Activated T-helper 2 cell treated with anti-CD3 and anti-CD28 coated beads, Interferon-gamma antibody, Interleukin-2, Interleukin-4, amounts not matched to agents 10 μg/mL and 5 μg/mL and 100 μg/mL, durations not matched to agents 14 hours and 24 hours and 36 hours (primary cell): ENCODE measurements at regions of chr1 and their contacts with region 1.

Region 1: DNA sequence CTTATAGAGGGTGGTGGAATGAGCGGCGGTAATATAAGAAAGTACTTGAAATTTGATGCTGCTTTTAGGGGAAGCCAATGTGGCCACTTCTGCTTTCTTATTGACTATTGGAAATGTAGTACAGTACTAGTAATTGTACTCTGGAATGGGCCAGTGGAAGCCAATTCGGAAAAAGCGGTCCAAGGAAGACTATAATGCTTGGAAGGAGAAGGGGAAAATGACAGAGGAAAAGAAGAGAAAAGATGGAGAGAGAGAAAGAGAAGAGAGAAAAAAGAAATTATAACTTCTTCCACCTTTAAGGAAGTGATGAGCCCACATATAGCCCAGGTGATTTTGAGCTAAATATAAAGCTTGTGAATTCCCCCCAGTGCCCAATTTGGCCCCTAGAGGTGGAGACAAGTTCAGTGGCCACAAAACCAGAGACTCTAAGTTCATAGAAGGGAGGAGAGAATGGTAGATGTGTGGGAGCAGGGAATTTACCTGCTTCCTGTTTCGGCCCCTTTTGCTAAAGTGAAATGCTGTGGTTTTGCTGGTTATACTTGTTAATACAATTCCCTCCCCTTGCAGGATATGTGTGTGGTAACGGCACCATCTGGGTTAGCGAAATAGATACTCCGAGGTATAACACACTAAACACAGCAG is 35.7 kb upstream of the DUSP10 start:
- DNase-seq: peak; percentile 37
- H3K4me3 Mint-ChIP-seq: peak overlapping the region; percentile 48
- H3K27ac Mint-ChIP-seq: peak overlapping the region; percentile 92
- H3K4me1 Mint-ChIP-seq: peaks cover 78% of the 10 kb centered on the region
- H3K27me3 Mint-ChIP-seq: no peaks in the 10 kb centered on the region

Region 2: DNA sequence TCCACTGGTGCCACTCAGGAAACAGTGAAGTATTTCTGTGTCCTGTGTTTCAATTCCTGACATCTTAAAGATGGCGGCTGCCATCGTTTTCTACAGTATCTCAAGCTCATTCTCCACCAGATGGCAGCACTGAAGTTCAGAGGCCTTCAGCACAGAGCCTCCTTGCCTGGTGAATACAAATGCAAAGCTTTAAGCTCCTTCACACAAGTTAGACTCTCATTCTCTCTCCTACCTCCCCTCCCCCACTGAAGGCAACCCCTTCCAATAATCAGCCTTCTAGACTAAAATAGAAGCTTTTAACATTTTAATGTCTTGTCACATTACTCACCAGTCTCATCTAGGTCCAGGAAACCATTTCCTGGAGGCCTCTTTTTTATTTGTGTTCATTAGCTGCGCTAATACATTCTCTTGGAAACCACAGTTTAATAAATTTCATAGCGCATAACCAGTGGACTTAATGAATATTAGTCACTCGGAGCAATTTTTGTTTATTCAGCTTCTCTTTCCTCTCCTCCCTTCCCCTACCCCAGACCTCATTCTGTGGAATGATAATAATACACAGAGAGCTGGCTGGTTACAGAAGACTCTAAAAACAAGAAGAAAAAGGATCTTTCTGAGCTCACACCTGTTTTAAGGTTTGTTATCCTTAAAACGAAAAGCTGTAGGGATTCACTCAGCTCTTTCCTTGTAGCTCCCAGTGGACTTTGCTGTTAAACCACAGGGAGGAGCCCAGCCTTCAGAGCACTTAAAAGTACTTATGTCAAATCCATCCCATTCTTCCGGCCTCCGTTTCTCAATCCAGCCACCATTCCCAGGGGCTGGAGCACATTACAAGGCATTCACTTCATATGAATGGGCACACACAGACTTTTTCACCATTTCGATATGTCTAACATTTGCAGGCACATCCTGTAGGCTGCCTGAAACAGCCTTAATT is 513.5 kb before region 1 on chr1:
- intact Hi-C with region 1: no loop called
- DNase-seq: peak; percentile 13
- H3K4me3 Mint-ChIP-seq: no peak overlapping the region
- H3K27ac Mint-ChIP-seq: no peak overlapping the region
- H3K4me1 Mint-ChIP-seq: no peaks in the 10 kb centered on the region
- H3K27me3 Mint-ChIP-seq: no peaks in the 10 kb centered on the region

Region 3: DNA sequence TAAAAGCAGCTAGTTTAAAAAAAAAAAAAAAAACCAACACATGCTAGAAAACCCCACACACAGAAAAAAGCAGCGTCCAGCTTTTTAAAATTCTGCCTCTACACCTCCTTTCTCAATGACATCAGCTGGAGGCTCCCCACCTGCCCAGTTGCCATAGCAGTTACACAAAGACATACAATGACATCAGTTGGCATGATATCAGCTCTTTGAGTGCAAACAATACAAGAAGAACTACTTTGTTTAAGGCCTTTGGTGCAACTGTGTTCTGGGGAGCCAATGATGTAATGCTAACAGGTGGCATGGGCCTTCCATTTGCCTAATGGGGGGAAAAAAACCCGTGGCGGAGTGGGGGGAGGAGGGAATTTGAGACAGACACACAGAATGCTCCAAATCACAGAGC is 68.6 kb before region 1 on chr1:
- intact Hi-C with region 1: loop called (anchors 1 kb)
- DNase-seq: peak; percentile 41
- H3K4me3 Mint-ChIP-seq: peak overlapping the region; percentile 33
- H3K27ac Mint-ChIP-seq: peak overlapping the region; percentile 98
- H3K4me1 Mint-ChIP-seq: peaks cover 65% of the 10 kb centered on the region
- H3K27me3 Mint-ChIP-seq: no peaks in the 10 kb centered on the region

Region 4: GRCh38 chr1:221753828-221754188 is 23.7 kb before region 1 on chr1:
- intact Hi-C with region 1: loop called (anchors 1 kb)
- DNase-seq: no peak
- H3K4me3 Mint-ChIP-seq: peak overlapping the region; percentile 28
- H3K27ac Mint-ChIP-seq: peak overlapping the region; percentile 81
- H3K4me1 Mint-ChIP-seq: peaks cover 50% of the 10 kb centered on the region
- H3K27me3 Mint-ChIP-seq: no peaks in the 10 kb centered on the region

Region 5: GRCh38 chr1:221809031-221810029 is 31.8 kb after region 1 on chr1:
- intact Hi-C with region 1: loop called (anchors 1 kb)
- DNase-seq: no peak
- H3K4me3 Mint-ChIP-seq: no peak overlapping the region
- H3K27ac Mint-ChIP-seq: peak overlapping the region; percentile 81
- H3K4me1 Mint-ChIP-seq: peaks cover 43% of the 10 kb centered on the region
- H3K27me3 Mint-ChIP-seq: peaks cover 4% of the 10 kb centered on the region

Region 6: GRCh38 chr1:221829327-221830015 is 51.9 kb after region 1 on chr1:
- intact Hi-C with region 1: loop called (anchors 1 kb)
- DNase-seq: peak; percentile 40
- H3K4me3 Mint-ChIP-seq: peak overlapping the region; percentile 67
- H3K27ac Mint-ChIP-seq: peak overlapping the region; percentile 97
- H3K4me1 Mint-ChIP-seq: peaks cover 70% of the 10 kb centered on the region
- H3K27me3 Mint-ChIP-seq: no peaks in the 10 kb centered on the region

Region 7: GRCh38 chr1:221878134-221878533 is 100.6 kb after region 1 on chr1:
- intact Hi-C with region 1: loop called (anchors 2 kb)
- DNase-seq: no peak
- H3K4me3 Mint-ChIP-seq: no peak overlapping the region
- H3K27ac Mint-ChIP-seq: no peak overlapping the region
- H3K4me1 Mint-ChIP-seq: peaks cover 12% of the 10 kb centered on the region
- H3K27me3 Mint-ChIP-seq: peaks cover 6% of the 10 kb centered on the region